CD8-positive, alpha-beta memory T cell (primary cell): ENCODE measurements at regions of chr2 and their contacts with region 1.

Region 1: DNA sequence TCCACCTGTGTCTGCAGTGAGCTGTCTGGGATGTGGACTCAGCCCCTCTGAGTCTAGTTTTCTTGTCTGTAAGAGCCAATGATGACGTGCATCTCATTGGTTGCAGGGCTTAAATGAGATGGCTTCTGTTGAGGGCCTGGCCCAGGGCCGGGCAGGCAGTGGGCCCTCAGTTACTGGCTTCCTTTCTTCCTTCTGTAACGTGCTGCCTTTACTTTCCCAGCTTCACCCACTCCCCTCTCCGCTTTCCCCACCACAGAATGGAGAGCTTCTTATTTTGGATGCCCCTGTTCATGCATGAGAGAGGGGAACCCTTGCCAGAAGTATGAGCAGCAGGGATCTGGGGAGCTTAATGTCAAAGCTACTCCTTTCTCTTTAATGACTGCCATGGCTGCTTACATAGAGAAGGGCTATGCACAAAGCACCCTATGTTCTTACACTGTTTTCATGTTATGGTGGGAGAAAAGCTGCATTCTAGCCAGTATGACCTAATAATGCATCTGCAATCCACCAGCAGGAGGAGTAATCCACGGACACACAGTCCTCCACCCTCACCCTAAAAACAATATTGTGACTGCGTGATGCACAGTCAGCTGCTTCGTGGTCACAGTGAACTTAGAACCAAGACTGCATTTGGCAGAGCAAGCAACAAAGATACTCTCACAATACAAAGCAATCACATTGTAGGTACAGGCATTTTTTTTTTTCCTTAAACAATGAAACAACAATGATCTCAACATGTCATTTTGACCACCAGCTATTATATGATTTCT is 37.2 kb downstream of the CREG2 start:
- DNase-seq: no peak
- H3K4me3 ChIP-seq: no peak overlapping the region
- H3K4me3 Mint-ChIP-seq: no peak overlapping the region
- H3K27ac ChIP-seq: no peak overlapping the region
- H3K27ac Mint-ChIP-seq: peak overlapping the region in 3 of 8 donors; percentile 2 to 86 (median 50)
- H3K4me1 ChIP-seq: no peaks in the 10 kb centered on the region
- H3K4me1 Mint-ChIP-seq: peaks cover 5 to 13% (median 12%) of the 10 kb centered on the region in 3 donors
- H3K27me3 ChIP-seq: no peaks in the 10 kb centered on the region
- H3K27me3 Mint-ChIP-seq: no peaks in the 10 kb centered on the region

Region 2: DNA sequence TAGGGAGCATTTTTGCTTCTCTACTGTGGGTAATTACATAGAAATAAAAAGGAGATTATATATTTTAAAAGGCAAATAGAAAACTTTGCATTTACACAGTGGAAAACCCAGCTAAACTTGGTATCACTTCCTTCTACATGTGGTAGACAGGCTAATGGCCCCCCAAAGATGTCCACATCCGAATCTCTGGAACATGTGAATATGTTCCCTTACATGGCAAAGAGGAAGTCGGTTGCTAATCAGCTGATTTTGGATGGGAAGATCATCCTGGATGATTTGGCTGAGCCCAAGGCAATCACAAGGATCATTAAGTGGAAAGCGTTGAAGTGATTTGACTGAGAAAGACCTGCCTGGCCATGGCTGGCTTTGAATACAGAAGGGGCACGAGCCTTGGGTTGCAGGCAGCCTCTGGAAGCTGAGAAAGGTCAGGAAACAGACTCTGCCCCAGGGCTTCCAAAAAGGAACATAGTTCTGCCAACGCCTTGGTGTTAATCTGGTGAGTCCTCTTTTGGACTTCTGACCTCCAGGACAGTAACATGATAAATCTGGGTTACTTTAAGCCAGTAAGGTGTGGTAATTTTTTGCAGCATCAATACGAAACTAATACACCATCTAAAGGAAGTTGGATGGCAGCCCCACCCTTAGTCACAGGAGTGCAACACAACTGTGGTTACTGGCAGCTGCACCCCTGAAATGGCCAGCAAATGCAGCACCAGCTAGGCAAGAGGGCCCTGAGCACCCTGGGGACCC is 11.2 kb after region 1 on chr2:
- CTCF ChIA-PET with region 1: interaction called, 37 read pairs
- POLR2A ChIA-PET with region 1: no interaction called
- DNase-seq: peak in 1 of 5 donors; percentile 23
- H3K4me3 ChIP-seq: peak overlapping the region; percentile 9
- H3K4me3 Mint-ChIP-seq: peak overlapping the region in 6 of 7 donors; percentile 29 to 81 (median 54)
- H3K27ac ChIP-seq: no peak overlapping the region
- H3K27ac Mint-ChIP-seq: peak overlapping the region; percentile 16 to 90 (median 80)
- H3K4me1 ChIP-seq: peaks cover 27% of the 10 kb centered on the region
- H3K4me1 Mint-ChIP-seq: peaks cover 28 to 37% (median 34%) of the 10 kb centered on the region in 3 donors
- H3K27me3 ChIP-seq: no peaks in the 10 kb centered on the region
- H3K27me3 Mint-ChIP-seq: peaks cover 0 to 6% of the 10 kb centered on the region in 2 donors

Region 3: GRCh38 chr2:101387151-101387807 is 37.2 kb after region 1 on chr2 and contains the start of gene CREG2:
- CTCF ChIA-PET with region 1: interaction called, 13 read pairs
- POLR2A ChIA-PET with region 1: no interaction called
- DNase-seq: peak; percentile 34 to 64 (median 53)
- H3K4me3 ChIP-seq: peak within 1 kb of the TSS; percentile 27
- H3K4me3 Mint-ChIP-seq: peak within 1 kb of the TSS; percentile 63 to 77 (median 77)
- H3K27ac ChIP-seq: no peak within 1 kb of the TSS
- H3K27ac Mint-ChIP-seq: peak within 1 kb of the TSS in 2 of 8 donors; percentile 47 to 72
- H3K4me1 ChIP-seq: peaks cover 13% of the 10 kb centered on the region
- H3K4me1 Mint-ChIP-seq: peaks cover 5 to 12% (median 7%) of the 10 kb centered on the region in 3 donors
- H3K27me3 ChIP-seq: peaks cover 25% of the 10 kb centered on the region
- H3K27me3 Mint-ChIP-seq: peaks cover 50 to 77% of the 10 kb centered on the region in 2 donors
- total RNA-seq, gene CREG2: not detected

Region 4: GRCh38 chr2:101790857-101791256 is 440.8 kb after region 1 on chr2:
- CTCF ChIA-PET with region 1: no interaction called
- POLR2A ChIA-PET with region 1: no interaction called
- DNase-seq: no peak
- H3K4me3 ChIP-seq: no peak overlapping the region
- H3K4me3 Mint-ChIP-seq: no peak overlapping the region
- H3K27ac ChIP-seq: no peak overlapping the region
- H3K27ac Mint-ChIP-seq: peak overlapping the region in 1 of 8 donors; percentile 7
- H3K4me1 ChIP-seq: peaks cover 10% of the 10 kb centered on the region
- H3K4me1 Mint-ChIP-seq: peaks cover 52 to 90% (median 85%) of the 10 kb centered on the region in 3 donors
- H3K27me3 ChIP-seq: no peaks in the 10 kb centered on the region
- H3K27me3 Mint-ChIP-seq: no peaks in the 10 kb centered on the region